HepG2 (cell line): ENCODE measurements at regions of chr2 and their contacts with region 1.

Region 1: DNA sequence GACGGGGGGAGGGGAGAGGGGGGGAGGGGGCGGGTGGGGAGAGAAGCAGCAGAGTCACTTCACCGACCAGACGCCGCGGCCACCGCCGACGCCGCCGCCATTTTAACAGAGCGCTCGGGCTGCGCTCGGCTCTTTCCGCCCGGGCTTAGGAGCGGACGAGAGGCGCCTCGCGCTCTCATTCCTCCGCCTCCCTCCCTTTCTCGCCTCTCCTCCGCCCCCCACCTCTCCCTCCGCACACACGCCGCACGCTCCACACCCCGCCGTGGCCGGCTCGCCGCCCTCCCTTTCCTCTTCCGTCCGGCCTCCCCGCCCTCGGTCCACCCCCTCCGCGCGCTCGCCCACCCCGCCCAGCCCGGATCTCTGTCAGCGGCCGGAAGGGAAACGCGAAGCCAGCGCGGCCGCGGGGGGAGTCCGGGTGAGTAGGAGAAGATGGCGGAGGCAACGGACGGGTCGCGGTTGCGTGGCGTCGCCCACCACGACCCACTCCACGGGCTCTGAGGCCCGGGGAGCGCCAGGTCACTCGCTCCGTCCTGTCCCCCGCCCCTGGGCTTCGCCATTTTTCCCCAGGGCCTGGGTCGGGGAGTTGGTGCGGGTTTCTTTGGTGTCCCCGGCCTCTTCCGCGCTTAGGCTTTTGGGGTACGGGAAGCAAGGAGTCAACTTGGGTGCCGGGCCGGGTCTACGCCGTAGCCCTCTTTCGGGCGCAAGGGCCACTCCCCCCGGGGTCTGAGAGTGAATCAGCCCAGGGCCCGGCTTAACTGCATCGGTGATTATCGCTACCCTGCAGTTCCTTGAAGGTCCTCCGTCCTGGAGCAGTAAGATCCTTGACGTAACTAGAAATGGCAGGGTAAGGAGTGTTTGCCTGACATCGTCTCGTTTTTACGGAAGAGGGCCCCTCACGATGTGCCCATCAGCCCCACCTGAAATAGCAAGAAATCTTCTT is at the start of gene USP34:
- DNase-seq: peak; percentile 92
- ATAC-seq: peak; percentile 89
- H3K4me3 ChIP-seq: peak within 1 kb of the TSS; percentile 89 to 99 (median 91)
- H3K27ac ChIP-seq: peak within 1 kb of the TSS; percentile 97
- H3K4me1 ChIP-seq: peaks cover 41% of the 10 kb centered on the region
- H3K27me3 ChIP-seq: no peaks in the 10 kb centered on the region; a peak in 1 of 5 replicates
- CTCF ChIP-seq: no peak
- EP300 ChIP-seq: 0 out of 4 replicates have a peak, but pooled peaks of 1 of the 2 experiments have one; percentile 13
- POLR2A ChIP-seq: peak; percentile 90 to 97
- RAD21 ChIP-seq: peak; percentile 58
- total RNA-seq, gene USP34: 100 and 155 TPM in 2 replicates

Region 2: DNA sequence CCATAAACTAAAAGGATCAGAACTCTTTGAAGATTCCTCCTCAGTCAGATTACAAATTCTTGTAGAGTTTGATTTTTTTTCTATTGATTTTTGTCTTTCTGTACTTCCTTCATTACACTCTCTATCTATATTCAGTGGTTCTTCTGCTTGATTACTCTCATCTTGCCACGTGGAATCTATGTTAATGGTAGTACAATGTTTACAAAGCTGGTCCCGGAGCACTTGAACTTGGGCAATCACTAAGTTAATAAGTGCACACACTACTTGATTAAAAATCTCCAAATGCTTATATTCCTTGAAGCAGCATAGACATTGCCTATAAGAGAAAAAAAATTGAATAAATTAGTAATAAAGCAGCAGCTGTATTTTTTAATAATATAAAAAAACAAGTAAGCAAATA is 65.4 kb before region 1 on chr2:
- CTCF ChIA-PET with region 1: no interaction called
- POLR2A ChIA-PET with region 1: no interaction called
- in situ Hi-C with region 1: no loop called
- intact Hi-C with region 1: no loop called
- DNase-seq: no peak
- ATAC-seq: no peak
- H3K4me3 ChIP-seq: no peak overlapping the region
- H3K27ac ChIP-seq: no peak overlapping the region
- H3K4me1 ChIP-seq: peaks cover 2% of the 10 kb centered on the region
- H3K27me3 ChIP-seq: no peaks in the 10 kb centered on the region
- CTCF ChIP-seq: no peak
- EP300 ChIP-seq: no peak
- POLR2A ChIP-seq: no peak
- RAD21 ChIP-seq: no peak

Region 3: DNA sequence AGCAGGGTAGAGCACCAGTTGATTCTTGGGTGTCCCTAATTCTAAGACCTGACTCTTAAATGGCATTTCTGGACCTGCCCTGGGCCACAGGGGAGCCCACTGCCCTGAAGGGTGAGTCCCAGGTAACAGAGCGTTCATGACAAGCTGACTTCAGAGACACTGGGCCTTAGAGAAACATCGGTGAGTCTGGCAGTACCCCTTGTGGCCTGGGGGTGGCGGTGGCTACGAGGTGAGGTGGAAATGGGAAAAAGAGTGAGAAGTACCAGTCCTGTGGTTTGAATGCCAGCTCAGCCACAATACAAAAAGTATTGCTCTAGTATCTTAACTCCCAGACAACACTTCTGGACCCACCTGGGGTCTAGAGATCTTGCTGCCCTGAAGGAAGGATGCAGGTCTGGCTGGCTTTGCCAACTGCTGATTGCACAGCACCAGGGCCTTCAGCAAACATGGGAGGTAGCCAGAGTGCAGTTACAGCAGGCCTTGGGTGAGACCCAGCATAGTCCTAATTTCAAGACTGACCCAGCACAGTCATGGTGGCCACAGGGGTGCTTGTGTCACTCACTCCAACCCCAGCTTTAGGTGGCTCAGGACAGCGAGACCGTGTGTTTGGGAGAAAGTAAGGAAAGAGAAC is 44.9 kb before region 1 on chr2:
- CTCF ChIA-PET with region 1: no interaction called
- POLR2A ChIA-PET with region 1: interaction called, 6 read pairs
- in situ Hi-C with region 1: loop called (anchors 5 kb)
- intact Hi-C with region 1: loop called (anchors 1 kb)
- DNase-seq: peak; percentile 66
- ATAC-seq: peak; percentile 94
- H3K4me3 ChIP-seq: no peak overlapping the region
- H3K27ac ChIP-seq: no peak overlapping the region
- H3K4me1 ChIP-seq: peaks cover 59% of the 10 kb centered on the region
- H3K27me3 ChIP-seq: no peaks in the 10 kb centered on the region
- CTCF ChIP-seq: peak; percentile 82
- EP300 ChIP-seq: no peak
- POLR2A ChIP-seq: no peak
- RAD21 ChIP-seq: peak; percentile 86

Region 4: DNA sequence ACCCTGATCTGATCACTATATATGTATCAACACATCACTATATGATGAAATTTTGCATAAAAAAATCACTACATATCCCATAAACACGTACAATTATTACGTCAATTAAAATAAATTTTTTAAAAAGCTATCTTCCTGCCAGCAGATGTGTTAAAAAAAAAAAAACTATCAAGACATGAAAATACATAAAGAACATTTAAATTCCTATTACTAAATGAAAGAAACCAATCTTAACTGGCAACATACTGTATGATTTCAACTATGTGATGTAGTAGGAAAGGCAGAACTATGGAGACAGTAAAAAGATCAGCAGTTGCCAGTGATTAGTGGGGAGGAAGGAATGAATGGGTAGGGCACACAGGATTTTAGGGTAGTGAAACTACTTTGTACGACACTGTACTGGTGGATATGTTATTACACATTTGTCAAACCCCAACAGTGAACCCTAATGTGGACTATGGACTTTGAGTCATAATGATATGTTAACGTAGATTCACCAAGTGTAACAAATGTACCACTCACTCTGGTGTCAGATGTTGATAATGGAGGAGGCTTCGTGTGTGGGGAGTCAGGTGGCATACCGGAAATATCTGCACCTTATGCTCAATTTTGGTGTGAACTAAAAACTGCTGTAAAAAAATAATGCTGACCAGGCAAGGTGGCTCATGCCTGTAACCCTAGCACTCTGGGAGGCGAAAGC is 27.7 kb before region 1 on chr2:
- CTCF ChIA-PET with region 1: no interaction called
- POLR2A ChIA-PET with region 1: interaction called, 5 read pairs
- in situ Hi-C with region 1: no loop called
- intact Hi-C with region 1: loop called (anchors 2 kb)
- DNase-seq: peak; percentile 92
- ATAC-seq: peak; percentile 81
- H3K4me3 ChIP-seq: peak overlapping the region in 1 of 3 experiments; percentile 11; a peak in 1 of 6 replicates
- H3K27ac ChIP-seq: peak overlapping the region; percentile 51
- H3K4me1 ChIP-seq: peaks cover 66% of the 10 kb centered on the region
- H3K27me3 ChIP-seq: no peaks in the 10 kb centered on the region
- CTCF ChIP-seq: no peak
- EP300 ChIP-seq: peak in 1 of 2 experiments; percentile 57; a peak in 2 of 4 replicates
- POLR2A ChIP-seq: no peak
- RAD21 ChIP-seq: peak; percentile 16; the same call in 1 of the 2 replicates